PC-3 (cell line): ENCODE measurements at regions of chr11 and their contacts with region 1.

Region 1: DNA sequence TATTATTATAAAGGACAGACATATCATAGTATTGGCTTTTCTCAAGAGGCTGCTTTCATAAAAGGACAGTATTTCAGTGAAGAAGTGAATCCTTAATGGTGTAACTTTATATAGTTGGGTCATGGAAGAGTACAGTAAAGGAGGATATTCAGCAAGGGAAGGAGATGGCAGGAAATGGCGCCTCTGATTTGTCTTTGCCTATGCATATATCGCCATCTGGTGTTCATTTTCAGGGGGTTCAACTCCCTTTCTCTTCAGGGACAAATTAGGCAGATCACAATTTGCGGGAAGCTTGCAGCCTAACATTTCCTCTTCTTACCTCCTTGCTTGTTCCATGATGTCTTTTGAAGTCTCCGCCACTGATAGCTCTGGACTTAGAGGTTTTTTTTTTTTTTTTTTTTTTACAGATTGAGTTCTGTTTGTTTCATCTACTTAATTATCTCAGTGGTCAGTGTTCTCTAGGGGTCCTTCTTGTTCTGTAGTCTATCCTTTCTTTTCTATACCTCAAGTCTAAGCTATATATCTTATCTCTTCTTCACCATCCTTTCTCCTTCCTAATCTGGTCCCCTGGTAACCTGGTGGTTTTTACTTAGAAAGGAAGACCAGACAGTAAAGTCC is 21.8 kb upstream of the RRM1 start:
- DNase-seq: peak; percentile 81
- ATAC-seq: peak; percentile 93
- H3K4me3 ChIP-seq: no peak overlapping the region
- H3K27ac ChIP-seq: no peak overlapping the region
- H3K4me1 ChIP-seq: no peaks in the 10 kb centered on the region
- H3K27me3 ChIP-seq: no peaks in the 10 kb centered on the region
- CTCF ChIP-seq: peak; percentile 80

Region 2: GRCh38 chr11:3849297-3849874 is 223.4 kb before region 1 on chr11:
- CTCF ChIA-PET with region 1: interaction called, 28 read pairs
- POLR2A ChIA-PET with region 1: no interaction called
- intact Hi-C with region 1: loop called (anchors 1 kb)
- DNase-seq: peak; percentile 74
- ATAC-seq: peak; percentile 87
- H3K4me3 ChIP-seq: no peak overlapping the region
- H3K27ac ChIP-seq: no peak overlapping the region
- H3K4me1 ChIP-seq: peaks cover 5% of the 10 kb centered on the region
- H3K27me3 ChIP-seq: no peaks in the 10 kb centered on the region
- CTCF ChIP-seq: peak; percentile 83

Region 3: GRCh38 chr11:3927133-3927796 is 145.5 kb before region 1 on chr11:
- CTCF ChIA-PET with region 1: no interaction called
- POLR2A ChIA-PET with region 1: no interaction called
- intact Hi-C with region 1: loop called (anchors 1 kb)
- DNase-seq: no peak
- ATAC-seq: no peak
- H3K4me3 ChIP-seq: no peak overlapping the region
- H3K27ac ChIP-seq: no peak overlapping the region
- H3K4me1 ChIP-seq: 0 out of 2 replicates have a peak, but pooled peaks cover 6% of the 10 kb centered on the region
- H3K27me3 ChIP-seq: no peaks in the 10 kb centered on the region
- CTCF ChIP-seq: peak; percentile 36; the same call in 1 of the 2 replicates

Region 4: DNA sequence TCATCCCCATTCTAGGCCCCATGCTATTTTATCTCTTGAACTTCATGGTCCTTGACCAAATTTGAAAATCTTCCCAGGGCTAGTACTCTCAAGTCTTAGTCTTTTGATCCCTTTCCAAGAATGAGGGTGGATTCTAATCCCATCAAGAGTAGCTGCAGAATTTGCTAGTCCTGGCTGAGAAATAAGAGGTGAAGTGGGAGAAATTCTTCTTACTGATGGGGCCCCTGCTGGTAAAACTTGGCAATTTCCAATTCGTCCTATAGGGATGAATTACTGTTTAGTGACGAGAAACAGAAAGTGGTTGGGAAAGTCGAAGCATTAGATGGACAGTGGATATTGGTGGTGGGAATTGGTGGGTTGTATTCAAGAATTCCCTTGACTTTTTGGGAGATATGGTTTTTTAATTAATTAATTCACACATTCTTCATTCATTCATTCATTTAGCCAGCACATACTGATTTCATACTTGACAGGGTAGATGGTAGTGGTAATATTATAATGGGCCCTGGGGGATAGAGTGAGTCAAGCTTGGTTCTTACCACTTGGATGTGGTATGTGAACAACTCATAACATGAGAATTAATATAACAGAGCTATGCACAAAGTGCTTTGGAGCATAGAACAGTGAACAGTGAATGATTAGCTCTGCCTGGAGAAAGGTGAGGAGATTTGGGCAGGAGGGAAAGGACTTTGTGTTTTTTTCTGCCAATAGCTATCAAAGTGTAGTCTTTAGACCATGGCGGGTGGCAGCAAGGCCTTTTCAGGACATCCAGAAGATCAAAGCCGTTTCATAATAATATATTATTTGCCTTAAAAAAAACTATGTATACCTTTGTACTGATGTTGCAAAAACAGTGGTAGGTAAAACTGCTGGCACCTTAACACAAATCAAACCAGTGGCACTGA is 113.5 kb before region 1 on chr11:
- CTCF ChIA-PET with region 1: no interaction called
- POLR2A ChIA-PET with region 1: no interaction called
- intact Hi-C with region 1: loop called (anchors 10 kb)
- DNase-seq: peak; percentile 60
- ATAC-seq: peak; percentile 33
- H3K4me3 ChIP-seq: no peak overlapping the region
- H3K27ac ChIP-seq: no peak overlapping the region
- H3K4me1 ChIP-seq: peaks cover 31% of the 10 kb centered on the region
- H3K27me3 ChIP-seq: no peaks in the 10 kb centered on the region
- CTCF ChIP-seq: peak; percentile 61

Region 5: GRCh38 chr11:3995949-3996554 is 76.7 kb before region 1 on chr11:
- CTCF ChIA-PET with region 1: no interaction called
- POLR2A ChIA-PET with region 1: no interaction called
- intact Hi-C with region 1: no loop called
- DNase-seq: peak; percentile 72
- ATAC-seq: peak; percentile 90
- H3K4me3 ChIP-seq: no peak overlapping the region
- H3K27ac ChIP-seq: peak overlapping the region; percentile 48
- H3K4me1 ChIP-seq: peaks cover 15% of the 10 kb centered on the region
- H3K27me3 ChIP-seq: no peaks in the 10 kb centered on the region
- CTCF ChIP-seq: no peak

Region 6: DNA sequence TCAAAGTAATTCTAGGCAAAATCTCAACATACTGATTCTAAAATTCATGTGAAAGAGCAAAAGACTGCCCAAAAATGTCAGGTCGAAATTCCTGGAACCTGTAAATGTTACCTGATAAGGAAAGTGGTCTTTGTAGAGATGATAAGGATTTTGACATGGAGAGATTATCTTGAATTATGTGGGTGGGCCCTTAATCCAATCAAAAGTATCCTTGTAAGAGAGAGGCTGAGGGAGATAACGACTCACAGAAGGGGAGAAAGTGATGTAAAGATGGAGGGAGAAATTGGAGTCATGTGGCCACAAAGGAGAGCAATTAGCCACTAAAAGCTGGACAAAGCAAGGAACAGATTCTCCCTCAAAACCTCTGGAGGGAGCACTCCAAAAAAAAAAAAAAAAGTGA is 42.4 kb after region 1 on chr11:
- CTCF ChIA-PET with region 1: no interaction called
- POLR2A ChIA-PET with region 1: no interaction called
- intact Hi-C with region 1: no loop called
- DNase-seq: no peak
- ATAC-seq: no peak
- H3K4me3 ChIP-seq: no peak overlapping the region
- H3K27ac ChIP-seq: no peak overlapping the region
- H3K4me1 ChIP-seq: no peaks in the 10 kb centered on the region
- H3K27me3 ChIP-seq: no peaks in the 10 kb centered on the region
- CTCF ChIP-seq: no peak